Right ventricle myocardium inferior (tissue), 1 donor: ENCODE measurements at regions of chr11 and their contacts with region 1.

Region 1: GRCh38 chr11:45209891-45210699 is 63.7 kb downstream of the PRDM11 start:
- DNase-seq: peak; percentile 94
- ATAC-seq: peak; percentile 96

Region 2: DNA sequence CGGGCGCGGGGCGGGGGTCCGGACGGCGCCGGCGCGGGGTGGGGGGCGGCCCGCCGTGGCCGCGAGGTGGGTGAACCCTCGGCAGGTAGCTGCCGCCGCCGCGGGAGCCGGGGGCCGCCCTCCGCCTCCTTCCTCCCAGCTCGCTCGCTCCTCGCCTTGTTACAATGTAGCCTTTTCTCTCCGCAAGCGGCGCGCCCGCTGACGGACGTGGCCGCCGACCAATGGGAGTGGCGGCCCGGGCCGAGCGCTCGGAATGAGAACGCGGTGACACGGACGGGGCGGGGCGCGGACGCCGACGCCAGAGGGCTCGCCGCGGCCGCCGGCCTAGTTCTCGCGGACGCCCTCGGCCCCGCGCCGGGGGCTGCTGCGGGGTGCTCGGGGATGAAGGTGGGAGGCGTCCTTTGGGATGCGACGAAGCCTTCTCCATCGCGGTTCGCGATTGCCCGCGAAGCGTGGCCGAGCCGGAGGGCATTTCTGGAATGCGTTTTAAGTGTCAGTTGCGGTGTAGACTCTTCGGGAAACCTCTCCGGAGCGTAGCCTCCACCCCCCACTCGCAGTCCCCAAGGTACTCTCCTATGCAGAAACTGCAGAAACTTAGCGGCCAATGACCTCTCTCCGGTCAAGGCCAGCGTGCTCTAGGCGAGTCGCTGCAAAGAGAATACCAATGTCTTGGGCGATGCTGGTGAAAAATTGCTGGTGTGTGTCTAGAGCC is 62.9 kb before region 1 on chr11:
- intact Hi-C with region 1: loop called (anchors 1 kb)
- DNase-seq: peak; percentile 98
- ATAC-seq: peak; percentile 97

Region 3: DNA sequence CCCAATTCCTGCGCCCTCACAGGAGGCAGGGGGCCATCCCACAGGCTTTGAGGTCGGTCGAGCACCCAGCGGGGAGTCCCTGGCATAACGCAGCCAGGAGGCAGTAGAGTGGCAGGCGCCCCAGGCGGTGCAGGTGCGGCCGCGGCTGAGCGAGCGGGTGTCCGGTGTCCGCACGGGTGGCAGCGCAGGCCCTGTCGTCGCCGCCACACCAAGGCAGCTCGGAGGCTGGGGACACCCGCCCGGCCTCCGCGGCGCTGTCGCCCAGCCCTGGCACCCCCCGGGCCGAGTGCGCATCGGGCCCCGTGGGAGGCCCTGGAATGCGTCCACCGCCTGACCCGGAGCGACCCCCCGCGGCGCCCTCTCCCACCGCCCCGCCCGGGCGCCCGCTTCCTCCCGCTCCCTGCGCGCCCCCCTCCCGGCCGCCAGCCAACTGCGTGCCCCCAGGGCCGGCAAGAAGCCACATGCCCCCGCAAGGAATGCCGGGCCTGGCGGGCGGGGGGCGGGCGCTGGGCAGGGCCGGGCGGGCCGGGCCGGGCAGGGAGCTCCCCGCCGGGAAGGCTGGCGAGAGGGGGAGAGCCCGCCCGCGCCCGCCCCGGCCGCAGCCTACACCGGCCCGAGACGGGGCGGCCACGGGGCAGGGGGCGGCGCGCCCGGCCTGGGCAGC is 29.8 kb before region 1 on chr11:
- intact Hi-C with region 1: loop called (anchors 1 kb)
- DNase-seq: no peak
- ATAC-seq: peak; percentile 74